Calu3 (cell line): ENCODE measurements at regions of chr1 and their contacts with region 1.

Region 1: DNA sequence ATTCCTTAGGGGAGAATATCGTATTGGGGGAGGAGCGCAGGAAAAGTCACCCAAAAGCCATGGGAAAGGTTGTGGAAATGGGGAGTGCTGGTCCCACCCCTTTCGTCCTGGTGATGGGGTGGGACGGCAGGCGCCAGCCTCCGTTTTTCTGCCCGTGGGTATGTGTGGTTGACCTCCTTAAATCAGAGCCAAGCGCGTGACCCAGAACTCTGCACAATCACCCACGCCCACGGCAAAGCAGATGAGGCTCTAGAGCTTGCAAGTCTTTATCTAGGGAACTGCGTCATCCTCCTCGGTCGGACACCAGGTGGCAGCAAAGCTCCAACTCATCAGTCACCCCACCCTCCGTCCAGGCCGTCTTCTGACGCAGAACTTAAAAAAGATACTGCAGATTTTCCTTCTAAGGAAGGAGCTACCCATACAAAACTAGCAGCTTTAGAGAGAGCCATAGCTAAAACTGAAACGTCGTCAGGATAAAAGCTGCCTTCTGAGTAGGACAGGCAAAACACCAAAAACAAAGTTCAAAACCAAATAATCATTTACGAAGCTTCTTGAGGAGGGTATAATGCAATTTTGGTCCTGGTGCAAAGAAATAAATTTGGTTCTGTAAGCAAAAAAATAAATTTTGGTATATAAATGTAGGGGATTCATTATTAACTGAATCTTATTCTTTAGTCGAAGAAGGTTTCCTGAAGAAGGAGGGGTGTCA is 62.0 kb downstream of the TBX19 start:
- DNase-seq: peak; percentile 89
- H3K4me3 Mint-ChIP-seq: peak overlapping the region; percentile 26
- H3K27ac Mint-ChIP-seq: no peak overlapping the region
- H3K4me1 Mint-ChIP-seq: peaks cover 1% of the 10 kb centered on the region
- H3K27me3 Mint-ChIP-seq: no peaks in the 10 kb centered on the region
- CTCF ChIP-seq: peak; percentile 84

Region 2: DNA sequence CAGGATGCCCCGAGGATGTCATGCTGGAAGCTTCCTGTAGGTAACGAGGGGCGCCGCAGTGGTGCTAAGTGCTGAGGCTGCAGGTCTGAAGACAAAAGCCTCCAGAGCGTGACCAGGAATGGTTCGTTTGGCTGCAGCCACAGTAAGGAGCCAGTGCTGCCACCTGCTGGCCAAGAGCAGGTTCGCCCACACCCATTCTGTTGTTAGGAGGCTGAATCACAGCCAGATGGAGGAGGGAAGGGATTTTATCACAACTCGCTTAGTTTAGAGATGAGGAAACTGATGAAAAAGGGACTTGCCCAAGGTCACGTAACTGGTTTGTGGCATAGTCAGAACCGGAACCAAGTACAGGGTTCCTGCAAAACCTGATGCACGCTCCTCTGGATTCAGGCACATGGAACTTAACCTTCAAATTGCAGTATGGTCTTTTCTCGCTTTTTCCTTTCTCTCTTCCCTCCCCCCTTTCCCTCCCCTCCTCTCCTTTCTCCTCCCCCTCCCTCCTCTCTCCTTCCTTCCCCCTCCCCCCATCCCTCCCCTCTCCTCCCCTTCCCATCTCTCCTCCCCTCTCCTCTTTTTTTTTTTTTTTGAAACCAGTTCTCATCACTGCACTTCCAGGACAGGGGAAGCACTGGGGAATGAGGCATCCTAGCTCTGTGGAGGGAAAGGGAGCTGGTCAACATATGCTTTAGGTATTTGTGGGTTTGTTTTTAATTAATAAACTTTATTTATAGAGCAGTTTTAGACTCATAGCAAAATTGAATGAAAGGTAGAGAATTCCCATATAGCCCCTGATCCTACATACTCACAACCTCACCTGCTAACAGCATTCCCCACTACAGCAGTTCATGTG is 539.1 kb before region 1 on chr1:
- CTCF ChIA-PET with region 1: no interaction called
- intact Hi-C with region 1: no loop called
- DNase-seq: peak; percentile 95
- H3K4me3 Mint-ChIP-seq: peak overlapping the region; percentile 20
- H3K27ac Mint-ChIP-seq: peak overlapping the region; percentile 3
- H3K4me1 Mint-ChIP-seq: peaks cover 24% of the 10 kb centered on the region
- H3K27me3 Mint-ChIP-seq: no peaks in the 10 kb centered on the region
- CTCF ChIP-seq: peak; percentile 95

Region 3: DNA sequence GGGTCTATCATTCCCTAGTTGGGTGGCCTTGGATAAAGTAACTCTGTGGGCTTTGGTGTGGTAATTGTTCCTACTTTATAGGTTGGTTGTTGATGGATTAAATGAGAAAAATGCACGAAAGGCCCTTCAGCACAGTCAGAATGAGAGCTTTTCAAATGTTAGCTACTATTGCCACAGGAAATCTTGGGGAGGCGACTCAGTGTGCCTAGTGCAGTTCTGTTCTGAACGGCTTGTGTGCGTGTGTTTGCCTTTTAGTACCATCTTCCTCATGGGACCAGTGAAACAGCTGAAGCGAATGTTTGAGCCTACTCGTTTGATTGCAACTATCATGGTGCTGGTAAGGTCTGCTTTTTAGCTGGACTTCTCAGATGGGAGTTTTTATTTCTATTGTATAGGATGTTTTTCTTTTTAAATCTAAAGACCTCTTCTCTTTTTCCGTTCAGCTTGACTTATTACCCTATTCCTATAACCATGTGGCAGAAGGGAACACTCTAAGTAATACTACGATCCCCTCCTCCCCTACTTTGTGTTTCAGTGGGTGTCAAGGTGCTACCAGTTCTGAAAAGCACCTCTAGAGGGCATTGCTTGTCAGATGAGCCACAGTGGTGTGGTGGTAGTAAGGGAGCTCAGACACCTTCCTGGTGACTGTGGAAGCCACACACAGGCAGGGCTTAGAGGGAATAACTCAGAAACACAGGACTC is 107.7 kb before region 1 on chr1:
- CTCF ChIA-PET with region 1: interaction called, 16 read pairs
- intact Hi-C with region 1: no loop called
- DNase-seq: peak; percentile 70
- H3K4me3 Mint-ChIP-seq: no peak overlapping the region
- H3K27ac Mint-ChIP-seq: no peak overlapping the region
- H3K4me1 Mint-ChIP-seq: peaks cover 38% of the 10 kb centered on the region
- H3K27me3 Mint-ChIP-seq: no peaks in the 10 kb centered on the region
- CTCF ChIP-seq: peak; percentile 60

Region 4: GRCh38 chr1:168365719-168366479 is 23.2 kb after region 1 on chr1:
- CTCF ChIA-PET with region 1: interaction called, 17 read pairs
- intact Hi-C with region 1: no loop called
- DNase-seq: no peak
- H3K4me3 Mint-ChIP-seq: no peak overlapping the region
- H3K27ac Mint-ChIP-seq: no peak overlapping the region
- H3K4me1 Mint-ChIP-seq: peaks cover 27% of the 10 kb centered on the region
- H3K27me3 Mint-ChIP-seq: peaks cover 16% of the 10 kb centered on the region
- CTCF ChIP-seq: no peak

Region 5: GRCh38 chr1:168386949-168387586 is 44.3 kb after region 1 on chr1:
- CTCF ChIA-PET with region 1: interaction called, 10 read pairs
- intact Hi-C with region 1: no loop called
- DNase-seq: peak; percentile 80
- H3K4me3 Mint-ChIP-seq: peak overlapping the region; percentile 66
- H3K27ac Mint-ChIP-seq: peak overlapping the region; percentile 90
- H3K4me1 Mint-ChIP-seq: peaks cover 15% of the 10 kb centered on the region
- H3K27me3 Mint-ChIP-seq: no peaks in the 10 kb centered on the region
- CTCF ChIP-seq: peak; percentile 30

Region 6: GRCh38 chr1:168439456-168440375 is 97.0 kb after region 1 on chr1:
- CTCF ChIA-PET with region 1: interaction called, 37 read pairs
- intact Hi-C with region 1: loop called (anchors 1 kb)
- DNase-seq: peak; percentile 88
- H3K4me3 Mint-ChIP-seq: peak overlapping the region; percentile 55
- H3K27ac Mint-ChIP-seq: no peak overlapping the region
- H3K4me1 Mint-ChIP-seq: peaks cover 28% of the 10 kb centered on the region
- H3K27me3 Mint-ChIP-seq: peaks cover 9% of the 10 kb centered on the region
- CTCF ChIP-seq: peak; percentile 92

Region 7: GRCh38 chr1:168572633-168573032 is 229.9 kb after region 1 on chr1:
- CTCF ChIA-PET with region 1: interaction called, 5 read pairs
- intact Hi-C with region 1: loop called (anchors 2 kb)
- DNase-seq: no peak
- H3K4me3 Mint-ChIP-seq: no peak overlapping the region
- H3K27ac Mint-ChIP-seq: no peak overlapping the region
- H3K4me1 Mint-ChIP-seq: peaks cover 8% of the 10 kb centered on the region
- H3K27me3 Mint-ChIP-seq: no peaks in the 10 kb centered on the region
- CTCF ChIP-seq: no peak

Region 8: GRCh38 chr1:168767894-168768584 is 425.3 kb after region 1 on chr1:
- CTCF ChIA-PET with region 1: no interaction called
- intact Hi-C with region 1: no loop called
- DNase-seq: no peak
- H3K4me3 Mint-ChIP-seq: no peak overlapping the region
- H3K27ac Mint-ChIP-seq: no peak overlapping the region
- H3K4me1 Mint-ChIP-seq: no peaks in the 10 kb centered on the region
- H3K27me3 Mint-ChIP-seq: no peaks in the 10 kb centered on the region
- CTCF ChIP-seq: no peak